Aorta (tissue), 5 donors: ENCODE measurements at regions of chr14 and their contacts with region 1.

Region 1: DNA sequence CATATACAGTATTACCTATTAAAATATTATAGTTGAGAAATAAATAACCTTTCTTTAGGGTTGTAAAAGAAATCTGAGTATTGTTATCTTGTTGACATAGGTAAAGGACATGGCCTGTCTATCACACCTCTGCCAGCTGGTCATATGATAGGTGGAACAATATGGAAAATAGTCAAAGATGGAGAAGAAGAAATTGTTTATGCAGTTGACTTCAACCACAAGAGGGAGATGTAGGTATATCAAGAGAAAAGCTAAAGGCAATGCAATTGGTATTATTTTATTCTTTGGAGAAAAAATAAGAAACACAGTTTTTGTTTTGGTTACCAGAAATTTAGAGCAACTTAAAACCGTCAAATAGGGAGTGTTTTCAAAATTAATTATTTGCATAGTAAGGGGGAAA is 13.5 kb downstream of the CPSF2 start:
- DNase-seq: no peak
- ATAC-seq: no peak
- H3K4me3 ChIP-seq: no peak overlapping the region
- H3K27ac ChIP-seq: no peak overlapping the region
- H3K4me1 ChIP-seq: no peaks in the 10 kb centered on the region
- H3K27me3 ChIP-seq: no peaks in the 10 kb centered on the region

Region 2: DNA sequence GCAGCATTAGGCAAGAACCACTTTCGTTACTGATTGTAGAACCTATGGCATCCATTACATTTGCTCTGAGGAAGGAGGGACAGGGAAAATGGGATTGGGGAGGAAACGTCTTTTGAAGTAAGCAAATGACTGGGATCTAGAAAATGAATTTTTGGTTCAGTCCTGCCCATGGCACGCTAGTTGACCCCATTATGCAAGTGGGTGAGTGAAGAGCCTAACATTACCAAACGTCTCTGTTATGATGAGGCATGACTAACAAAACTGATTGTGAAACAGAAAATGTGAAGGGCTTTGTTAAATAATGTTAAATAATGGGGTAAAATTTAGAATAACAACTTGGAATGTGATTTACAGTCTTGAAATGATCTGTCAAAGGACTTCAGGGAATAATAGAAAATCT is 25.4 kb after region 1 on chr14:
- intact Hi-C with region 1: no loop called
- DNase-seq: no peak
- ATAC-seq: peak; percentile 71
- H3K4me3 ChIP-seq: no peak overlapping the region
- H3K27ac ChIP-seq: no peak overlapping the region
- H3K4me1 ChIP-seq: peaks cover 0 to 1% of the 10 kb centered on the region in 2 donors
- H3K27me3 ChIP-seq: no peaks in the 10 kb centered on the region

Region 3: GRCh38 chr14:92680781-92681650 is 545.7 kb after region 1 on chr14:
- intact Hi-C with region 1: loop called in 1 of 2 experiments (anchors 5 kb)
- DNase-seq: peak; percentile 84 to 92
- ATAC-seq: peak; percentile 76
- H3K4me3 ChIP-seq: no peak overlapping the region
- H3K27ac ChIP-seq: no peak overlapping the region
- H3K4me1 ChIP-seq: no peaks in the 10 kb centered on the region
- H3K27me3 ChIP-seq: no peaks in the 10 kb centered on the region